ENCODE measurements at regions of chr11 and their contacts with region 1.

Region 1: DNA sequence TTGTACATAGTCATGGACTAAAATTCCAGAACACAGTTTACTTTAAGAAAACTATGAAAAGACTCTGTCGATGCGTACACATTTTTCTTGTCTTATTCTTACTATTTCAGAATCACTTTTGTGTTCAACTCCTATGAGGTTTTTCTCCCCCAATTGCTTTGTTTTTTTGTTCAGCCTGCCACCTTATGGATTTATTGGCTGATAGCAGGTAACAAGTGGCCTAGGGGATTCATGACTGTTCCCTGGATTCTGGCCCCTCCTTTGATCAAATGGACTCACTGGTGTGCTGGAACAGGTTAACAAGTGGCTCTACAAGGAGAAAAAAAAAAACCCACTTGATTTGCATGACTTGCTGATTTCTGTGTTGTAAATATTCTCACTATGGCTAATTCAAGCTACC is 10.6 kb downstream of the MMP20 start:
- DNase-seq: no peak
- H3K4me3 ChIP-seq: no peak overlapping the region
- H3K27ac ChIP-seq: no peak overlapping the region
- H3K4me1 ChIP-seq: no peaks in the 10 kb centered on the region
- H3K27me3 ChIP-seq: no peaks in the 10 kb centered on the region
- CTCF ChIP-seq: peak; percentile 5 to 34

Region 2: GRCh38 chr11:102341844-102342318 is 272.6 kb before region 1 on chr11:
- CTCF ChIA-PET with region 1: interaction called, 3 read pairs
- dilution Hi-C with region 1: no loop called
- in situ Hi-C with region 1: no loop called
- intact Hi-C with region 1: loop called (anchors 1 kb)
- DNase-seq: peak; percentile 72
- H3K4me3 ChIP-seq: no peak overlapping the region
- H3K27ac ChIP-seq: no peak overlapping the region
- H3K4me1 ChIP-seq: peaks cover 12% of the 10 kb centered on the region
- H3K27me3 ChIP-seq: no peaks in the 10 kb centered on the region
- CTCF ChIP-seq: peak; percentile 79 to 85

Region 3: GRCh38 chr11:102666331-102666957 is 52.0 kb after region 1 on chr11:
- CTCF ChIA-PET with region 1: interaction called, 4 read pairs
- dilution Hi-C with region 1: loop called (anchors 5 kb)
- in situ Hi-C with region 1: no loop called
- intact Hi-C with region 1: loop called (anchors 5 kb)
- DNase-seq: peak; percentile 37
- H3K4me3 ChIP-seq: no peak overlapping the region
- H3K27ac ChIP-seq: no peak overlapping the region
- H3K4me1 ChIP-seq: no peaks in the 10 kb centered on the region
- H3K27me3 ChIP-seq: no peaks in the 10 kb centered on the region
- CTCF ChIP-seq: peak; percentile 89 to 92

Measured in mammary epithelial cell (primary cell).